Activated naive CD4-positive, alpha-beta T cell treated with anti-CD3 and anti-CD28 coated beads for 36 hours (primary cell): ENCODE measurements at regions of chr1 and their contacts with region 1.

Region 1: GRCh38 chr1:168082008-168082876 is 54.5 kb downstream of the GPR161 start:
- DNase-seq: peak; percentile 87
- H3K4me3 Mint-ChIP-seq: no peak overlapping the region
- H3K27ac Mint-ChIP-seq: no peak overlapping the region
- H3K4me1 Mint-ChIP-seq: no peaks in the 10 kb centered on the region
- H3K27me3 Mint-ChIP-seq: no peaks in the 10 kb centered on the region

Region 2: GRCh38 chr1:167599957-167600581 is 482.2 kb before region 1 on chr1:
- CTCF ChIA-PET with region 1: interaction called, 7 read pairs
- intact Hi-C with region 1: loop called (anchors 1 kb)
- DNase-seq: peak; percentile 71
- H3K4me3 Mint-ChIP-seq: peak overlapping the region; percentile 45
- H3K27ac Mint-ChIP-seq: peak overlapping the region; percentile 67
- H3K4me1 Mint-ChIP-seq: peaks cover 39% of the 10 kb centered on the region
- H3K27me3 Mint-ChIP-seq: no peaks in the 10 kb centered on the region

Region 3: DNA sequence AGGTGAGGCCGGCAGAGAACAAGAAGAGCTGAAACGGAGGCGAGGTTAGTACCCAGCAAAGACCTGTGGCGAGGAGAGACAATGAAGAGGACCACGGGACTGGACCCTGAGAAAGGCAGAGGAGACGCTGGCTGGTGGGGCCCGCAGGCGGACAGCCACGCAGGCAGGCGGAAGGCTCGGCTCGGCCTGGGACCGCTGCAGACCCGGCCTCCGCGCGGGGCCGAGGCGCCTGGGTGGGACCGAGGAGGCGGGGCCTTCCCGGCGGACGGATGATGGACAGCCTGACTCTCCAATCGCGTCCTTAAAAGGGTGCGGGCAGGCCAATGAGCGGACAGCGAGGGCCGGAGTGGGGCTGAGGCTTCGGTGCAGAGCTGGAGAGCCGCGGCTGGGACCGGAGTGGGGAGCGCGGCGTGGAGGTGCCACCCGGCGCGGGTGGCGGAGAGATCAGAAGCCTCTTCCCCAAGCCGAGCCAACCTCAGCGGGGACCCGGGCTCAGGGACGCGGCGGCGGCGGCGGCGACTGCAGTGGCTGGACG is 360.6 kb before region 1 on chr1 and contains the start of gene MPZL1:
- CTCF ChIA-PET with region 1: interaction called, 9 read pairs
- intact Hi-C with region 1: loop called (anchors 1 kb)
- DNase-seq: peak; percentile 94
- H3K4me3 Mint-ChIP-seq: peak within 1 kb of the TSS; percentile 89
- H3K27ac Mint-ChIP-seq: peak within 1 kb of the TSS; percentile 65
- H3K4me1 Mint-ChIP-seq: peaks cover 57% of the 10 kb centered on the region
- H3K27me3 Mint-ChIP-seq: no peaks in the 10 kb centered on the region
- total RNA-seq, gene MPZL1: 24.2 to 28.1 TPM

Region 4: DNA sequence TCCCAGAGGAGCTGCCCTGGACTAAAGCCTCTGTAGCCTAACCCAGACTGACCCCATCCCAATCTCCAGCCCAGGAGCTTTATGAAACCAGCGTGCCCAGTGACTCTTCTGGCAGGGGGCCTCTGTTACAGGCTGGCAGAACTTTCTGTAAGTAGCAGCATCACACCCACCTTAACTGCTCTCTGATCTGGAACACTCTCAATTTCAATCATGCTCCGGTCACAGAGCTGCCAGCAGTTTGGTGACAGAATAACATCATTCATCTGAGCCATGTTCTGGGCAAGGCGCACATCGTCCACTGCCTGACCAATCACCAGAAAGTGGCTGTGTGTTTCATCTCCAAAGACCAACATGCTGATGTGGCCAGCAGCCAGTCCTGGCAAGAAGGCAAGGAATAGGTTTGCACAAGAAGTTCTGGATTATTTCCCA is 183.0 kb before region 1 on chr1:
- CTCF ChIA-PET with region 1: interaction called, 7 read pairs
- intact Hi-C with region 1: loop called (anchors 1 kb)
- DNase-seq: no peak
- H3K4me3 Mint-ChIP-seq: no peak overlapping the region
- H3K27ac Mint-ChIP-seq: no peak overlapping the region
- H3K4me1 Mint-ChIP-seq: no peaks in the 10 kb centered on the region
- H3K27me3 Mint-ChIP-seq: no peaks in the 10 kb centered on the region

Region 5: DNA sequence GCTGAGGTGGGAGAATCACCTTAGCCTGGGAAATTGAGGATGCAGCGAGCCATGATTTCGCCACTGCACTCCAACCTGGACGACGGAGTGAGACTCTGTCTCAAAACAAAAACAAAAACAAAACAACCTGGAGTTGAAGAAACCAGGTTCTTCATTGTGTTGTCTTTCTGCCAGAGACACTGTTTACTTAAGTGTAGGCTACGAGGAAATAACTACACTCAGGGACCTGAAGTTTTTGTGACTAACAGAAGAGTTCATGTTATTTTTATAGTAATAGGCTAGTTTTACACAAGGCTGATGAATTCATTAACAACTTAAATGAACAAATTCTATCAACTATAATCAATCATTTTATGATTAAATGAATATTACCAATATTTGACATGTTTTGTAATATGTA is 46.9 kb before region 1 on chr1:
- CTCF ChIA-PET with region 1: no interaction called
- intact Hi-C with region 1: no loop called
- DNase-seq: no peak
- H3K4me3 Mint-ChIP-seq: no peak overlapping the region
- H3K27ac Mint-ChIP-seq: no peak overlapping the region
- H3K4me1 Mint-ChIP-seq: no peaks in the 10 kb centered on the region
- H3K27me3 Mint-ChIP-seq: no peaks in the 10 kb centered on the region

Region 6: DNA sequence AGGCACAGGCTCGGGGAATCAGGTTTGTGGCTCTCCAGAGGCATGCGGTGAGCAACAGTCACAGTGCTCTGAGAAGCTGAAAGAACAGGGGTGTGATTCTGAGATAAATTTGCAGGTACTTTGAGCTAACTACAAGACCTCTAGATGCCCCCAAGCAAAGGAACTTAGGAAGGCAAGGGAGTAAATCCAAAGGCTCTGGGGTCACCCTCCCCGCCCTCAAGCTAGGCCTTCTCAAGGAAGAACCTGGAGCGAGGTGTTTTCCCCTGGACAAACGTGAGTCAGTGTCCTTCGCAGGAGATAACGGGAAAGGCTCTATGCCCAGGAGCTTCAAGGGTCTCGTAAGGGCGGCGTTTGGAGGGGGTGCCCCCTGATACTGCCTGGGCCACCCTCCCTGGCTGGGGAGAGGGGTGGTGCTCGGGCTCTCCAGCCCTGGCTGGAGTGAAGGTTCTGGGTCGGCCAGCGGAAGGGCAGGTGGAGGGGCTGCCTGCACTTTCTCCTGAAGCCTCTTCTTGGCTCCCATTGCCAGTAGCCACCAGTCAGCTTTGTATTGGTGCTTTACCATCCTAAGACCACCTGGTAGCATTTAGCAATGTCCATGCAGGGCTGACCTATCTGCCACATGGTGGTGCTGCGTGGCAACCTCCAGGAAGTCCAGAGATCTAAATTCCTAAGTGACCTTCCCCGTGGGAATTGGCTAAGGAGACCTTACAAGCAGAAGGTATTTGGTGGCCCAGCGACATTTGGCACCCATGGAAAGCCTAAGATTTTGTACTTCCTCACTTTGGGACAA is 10.5 kb after region 1 on chr1:
- CTCF ChIA-PET with region 1: interaction called, 36 read pairs
- intact Hi-C with region 1: no loop called
- DNase-seq: no peak
- H3K4me3 Mint-ChIP-seq: no peak overlapping the region
- H3K27ac Mint-ChIP-seq: no peak overlapping the region
- H3K4me1 Mint-ChIP-seq: no peaks in the 10 kb centered on the region
- H3K27me3 Mint-ChIP-seq: no peaks in the 10 kb centered on the region

Region 7: GRCh38 chr1:168145184-168146159 is 63.2 kb after region 1 on chr1:
- CTCF ChIA-PET with region 1: interaction called, 26 read pairs
- intact Hi-C with region 1: loop called (anchors 1 kb)
- DNase-seq: peak; percentile 94
- H3K4me3 Mint-ChIP-seq: no peak overlapping the region
- H3K27ac Mint-ChIP-seq: no peak overlapping the region
- H3K4me1 Mint-ChIP-seq: peaks cover 15% of the 10 kb centered on the region
- H3K27me3 Mint-ChIP-seq: no peaks in the 10 kb centered on the region